ENCODE measurements at regions of chr2 and their contacts with region 1.

Region 1: GRCh38 chr2:197867624-197868023 is 63.2 kb downstream of the PLCL1 start:
- DNase-seq: no peak
- ATAC-seq: no peak
- H3K4me3 ChIP-seq: no peak overlapping the region
- H3K27ac ChIP-seq: no peak overlapping the region
- H3K4me1 ChIP-seq: no peaks in the 10 kb centered on the region
- H3K27me3 ChIP-seq: peaks cover 0 to 4% of the 10 kb centered on the region in 2 experiments; a peak in 1 of 4 replicates
- CTCF ChIP-seq: no peak
- EP300 ChIP-seq: no peak
- POLR2A ChIP-seq: no peak
- RAD21 ChIP-seq: no peak

Region 2: GRCh38 chr2:197857476-197858107 is 10.0 kb before region 1 on chr2:
- CTCF ChIA-PET with region 1: interaction called, 7 read pairs
- POLR2A ChIA-PET with region 1: interaction called, 3 read pairs
- RAD21 ChIA-PET with region 1: interaction called, 5 read pairs
- SMC1A ChIA-PET with region 1: interaction called, 18 read pairs
- in situ Hi-C with region 1: no loop called
- intact Hi-C with region 1: no loop called
- DNase-seq: no peak
- ATAC-seq: no peak
- H3K4me3 ChIP-seq: no peak overlapping the region
- H3K27ac ChIP-seq: no peak overlapping the region
- H3K4me1 ChIP-seq: no peaks in the 10 kb centered on the region
- H3K27me3 ChIP-seq: no peaks in the 10 kb centered on the region
- CTCF ChIP-seq: no peak
- EP300 ChIP-seq: no peak
- POLR2A ChIP-seq: no peak
- RAD21 ChIP-seq: no peak

Region 3: DNA sequence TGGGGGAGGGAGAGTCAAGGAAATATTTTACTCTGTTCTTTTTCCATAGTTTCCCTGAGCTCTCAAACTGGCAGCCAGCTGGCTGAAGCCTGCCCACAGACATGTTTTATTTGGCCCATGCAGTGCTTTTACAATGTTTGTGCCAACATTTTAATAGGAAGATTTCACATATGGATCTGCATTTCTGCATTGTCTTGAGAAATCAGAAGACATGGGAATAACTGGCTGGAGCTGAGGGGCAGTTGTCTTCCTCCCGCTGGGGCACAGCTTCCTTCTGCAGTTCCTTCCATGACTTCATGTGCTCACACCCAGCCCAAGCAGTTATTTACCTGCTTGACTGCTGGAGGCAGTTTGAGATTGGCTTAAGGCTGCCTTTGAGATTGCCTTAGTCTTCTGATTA is 11.2 kb after region 1 on chr2:
- CTCF ChIA-PET with region 1: interaction called, 3 read pairs
- POLR2A ChIA-PET with region 1: no interaction called
- RAD21 ChIA-PET with region 1: interaction called, 3 read pairs
- SMC1A ChIA-PET with region 1: interaction called, 10 read pairs
- in situ Hi-C with region 1: no loop called
- intact Hi-C with region 1: no loop called
- DNase-seq: no peak
- ATAC-seq: no peak
- H3K4me3 ChIP-seq: no peak overlapping the region
- H3K27ac ChIP-seq: no peak overlapping the region
- H3K4me1 ChIP-seq: no peaks in the 10 kb centered on the region
- H3K27me3 ChIP-seq: no peaks in the 10 kb centered on the region
- CTCF ChIP-seq: no peak
- EP300 ChIP-seq: no peak
- POLR2A ChIP-seq: no peak
- RAD21 ChIP-seq: no peak

Region 4: DNA sequence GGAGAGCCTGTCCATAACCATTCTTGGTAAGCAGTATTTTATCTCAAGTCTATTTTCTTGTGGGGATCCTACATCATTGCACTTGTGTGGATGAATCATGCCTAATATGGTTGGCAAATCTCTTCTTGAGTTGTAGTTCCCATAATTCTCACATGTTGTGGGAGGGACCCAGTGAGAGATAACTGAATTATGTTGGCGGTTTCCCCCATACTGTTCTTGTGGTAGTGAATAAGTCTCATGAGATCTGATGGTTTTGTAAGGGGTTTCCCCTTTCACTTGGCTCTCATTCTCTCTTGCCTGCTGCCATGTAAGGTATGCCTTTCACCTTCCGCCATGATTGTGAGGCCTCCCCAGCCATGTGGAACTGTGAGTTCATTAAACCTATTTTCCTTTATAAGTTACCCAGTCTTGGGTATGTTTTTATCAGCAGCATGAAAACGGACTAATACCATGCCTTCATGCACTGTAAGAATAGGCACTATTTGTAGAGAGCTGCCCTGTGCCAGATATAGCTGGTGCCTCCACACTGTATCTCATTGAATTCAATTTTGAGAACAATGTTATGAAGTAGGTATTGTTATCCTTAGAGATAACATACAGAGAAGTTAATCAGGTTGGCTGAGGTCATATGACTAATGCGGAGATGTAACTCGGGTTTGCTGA is 85.0 kb after region 1 on chr2:
- CTCF ChIA-PET with region 1: no interaction called
- POLR2A ChIA-PET with region 1: no interaction called
- RAD21 ChIA-PET with region 1: no interaction called
- SMC1A ChIA-PET with region 1: no interaction called
- in situ Hi-C with region 1: no loop called
- intact Hi-C with region 1: no loop called
- DNase-seq: peak; percentile 24
- ATAC-seq: peak; percentile 90
- H3K4me3 ChIP-seq: no peak overlapping the region
- H3K27ac ChIP-seq: no peak overlapping the region
- H3K4me1 ChIP-seq: no peaks in the 10 kb centered on the region
- H3K27me3 ChIP-seq: no peaks in the 10 kb centered on the region
- CTCF ChIP-seq: no peak
- EP300 ChIP-seq: peak in 1 of 2 experiments; percentile 20; a peak in 1 of 4 replicates
- POLR2A ChIP-seq: no peak
- RAD21 ChIP-seq: no peak